Endothelial cell of umbilical vein (primary cell): ENCODE measurements at regions of chr1 and their contacts with region 1.

Region 1: DNA sequence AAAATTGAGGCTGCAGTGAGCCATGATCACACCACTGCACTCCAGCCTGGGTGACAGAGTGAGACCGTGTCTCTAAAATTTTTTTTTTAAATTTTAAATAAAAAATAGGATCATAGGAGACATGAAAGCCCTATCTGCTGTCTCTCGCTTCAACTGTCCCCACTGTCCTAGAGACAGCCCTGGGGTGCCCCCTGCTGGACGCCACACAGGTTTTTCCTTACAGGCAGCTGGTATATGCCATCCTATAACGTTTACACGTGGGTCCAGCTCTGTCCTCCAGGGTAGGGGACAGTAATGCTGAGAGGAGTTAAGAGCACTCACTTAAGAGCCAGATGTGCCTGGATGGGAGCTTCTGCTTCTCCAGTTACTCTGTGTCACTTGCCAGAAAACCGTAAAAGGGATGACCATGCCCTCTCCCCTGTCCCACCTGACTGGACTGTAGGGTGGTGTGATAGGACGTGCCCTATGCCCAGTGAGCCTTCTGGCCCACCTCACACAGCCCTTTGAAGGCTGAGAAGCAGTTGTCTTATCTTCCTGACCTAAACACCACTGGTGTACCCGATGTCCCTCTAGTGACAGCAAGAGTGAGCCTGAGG is 8.5 kb downstream of the FBXO2 start:
- DNase-seq: peak; percentile 64
- H3K4me3 ChIP-seq: no peak overlapping the region
- H3K27ac ChIP-seq: no peak overlapping the region
- H3K4me1 ChIP-seq: no peaks in the 10 kb centered on the region
- H3K27me3 ChIP-seq: no peaks in the 10 kb centered on the region
- CTCF ChIP-seq: peak; percentile 72 to 84
- POLR2A ChIP-seq: no peak

Region 2: GRCh38 chr1:11262171-11263049 is 383.4 kb before region 1 on chr1 and contains the start of gene MTOR:
- CTCF ChIA-PET with region 1: interaction called, 13 read pairs
- POLR2A ChIA-PET with region 1: no interaction called
- dilution Hi-C with region 1: no loop called
- intact Hi-C with region 1: no loop called
- DNase-seq: peak; percentile 100
- H3K4me3 ChIP-seq: peak within 1 kb of the TSS; percentile 92 to 99 (median 94)
- H3K27ac ChIP-seq: peak within 1 kb of the TSS; percentile 61
- H3K4me1 ChIP-seq: peaks cover 10% of the 10 kb centered on the region
- H3K27me3 ChIP-seq: no peaks in the 10 kb centered on the region
- CTCF ChIP-seq: peak in 1 of 2 donors; percentile 4
- POLR2A ChIP-seq: peak; percentile 78
- total RNA-seq, gene MTOR: 50.4 and 53.1 TPM in 2 replicates

Region 3: GRCh38 chr1:11337580-11338073 is 308.1 kb before region 1 on chr1:
- CTCF ChIA-PET with region 1: interaction called, 22 read pairs
- POLR2A ChIA-PET with region 1: no interaction called
- dilution Hi-C with region 1: no loop called
- intact Hi-C with region 1: loop called (anchors 1 kb)
- DNase-seq: peak; percentile 51
- H3K4me3 ChIP-seq: no peak overlapping the region
- H3K27ac ChIP-seq: no peak overlapping the region
- H3K4me1 ChIP-seq: no peaks in the 10 kb centered on the region
- H3K27me3 ChIP-seq: peaks cover 0 to 4% of the 10 kb centered on the region in 2 experiments
- CTCF ChIP-seq: peak; percentile 84 to 91
- POLR2A ChIP-seq: no peak

Region 4: DNA sequence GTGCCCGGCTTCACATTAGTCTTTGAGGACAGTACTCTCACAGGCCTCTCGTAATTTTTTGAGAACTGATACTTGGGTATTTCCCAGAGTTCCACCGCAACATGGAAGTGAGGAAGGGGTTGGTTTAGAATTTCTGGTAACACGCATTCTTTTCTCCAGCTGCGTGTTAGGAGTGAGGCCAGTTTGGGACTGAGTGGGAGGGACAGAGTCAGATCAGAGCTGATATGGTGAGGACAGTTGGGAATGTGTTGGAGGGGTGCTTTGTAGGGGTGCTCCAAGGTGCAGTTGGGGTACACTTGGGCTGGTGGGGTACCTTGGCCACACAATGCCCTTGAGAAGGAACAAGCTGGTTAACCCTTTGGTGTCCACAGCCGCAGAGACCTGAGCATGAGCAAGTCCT is 25.0 kb after region 1 on chr1:
- CTCF ChIA-PET with region 1: interaction called, 45 read pairs
- POLR2A ChIA-PET with region 1: no interaction called
- dilution Hi-C with region 1: no loop called
- intact Hi-C with region 1: no loop called
- DNase-seq: no peak
- H3K4me3 ChIP-seq: no peak overlapping the region
- H3K27ac ChIP-seq: no peak overlapping the region
- H3K4me1 ChIP-seq: no peaks in the 10 kb centered on the region
- H3K27me3 ChIP-seq: no peaks in the 10 kb centered on the region
- CTCF ChIP-seq: no peak
- POLR2A ChIP-seq: no peak

Region 5: GRCh38 chr1:11719313-11720032 is 73.7 kb after region 1 on chr1:
- CTCF ChIA-PET with region 1: interaction called, 135 read pairs
- POLR2A ChIA-PET with region 1: no interaction called
- dilution Hi-C with region 1: no loop called
- intact Hi-C with region 1: loop called (anchors 1 kb)
- DNase-seq: peak; percentile 76
- H3K4me3 ChIP-seq: peak overlapping the region in 2 of 3 experiments; percentile 4 to 34
- H3K27ac ChIP-seq: no peak overlapping the region
- H3K4me1 ChIP-seq: peaks cover 4% of the 10 kb centered on the region
- H3K27me3 ChIP-seq: peaks cover 0 to 4% of the 10 kb centered on the region in 2 experiments
- CTCF ChIP-seq: peak; percentile 88 to 91
- POLR2A ChIP-seq: no peak

Region 6: DNA sequence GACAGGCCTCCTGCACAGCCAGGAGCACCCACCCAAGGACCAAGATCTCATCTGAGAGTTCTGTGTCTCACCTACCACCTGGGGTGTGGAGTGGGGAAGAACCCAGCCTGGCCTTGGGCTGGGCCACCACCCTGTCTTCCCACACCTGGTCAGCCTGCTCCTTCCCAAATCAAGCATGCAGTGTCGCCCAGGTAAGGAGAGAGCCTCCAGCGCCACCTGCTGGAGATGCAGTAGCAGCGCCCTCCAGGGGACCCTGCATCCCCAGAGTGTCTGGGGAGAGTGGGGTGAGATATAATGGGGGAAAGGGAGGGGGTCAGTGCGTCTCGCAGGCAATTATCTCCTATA is 248.1 kb after region 1 on chr1:
- CTCF ChIA-PET with region 1: interaction called, 3 read pairs
- POLR2A ChIA-PET with region 1: no interaction called
- dilution Hi-C with region 1: no loop called
- intact Hi-C with region 1: loop called (anchors 2 kb)
- DNase-seq: peak; percentile 38
- H3K4me3 ChIP-seq: no peak overlapping the region
- H3K27ac ChIP-seq: no peak overlapping the region
- H3K4me1 ChIP-seq: no peaks in the 10 kb centered on the region
- H3K27me3 ChIP-seq: peaks cover 7 to 9% of the 10 kb centered on the region in 2 experiments
- CTCF ChIP-seq: peak; percentile 88 to 95
- POLR2A ChIP-seq: no peak